ENCODE measurements at regions of chr22 and their contacts with region 1.

Region 1: DNA sequence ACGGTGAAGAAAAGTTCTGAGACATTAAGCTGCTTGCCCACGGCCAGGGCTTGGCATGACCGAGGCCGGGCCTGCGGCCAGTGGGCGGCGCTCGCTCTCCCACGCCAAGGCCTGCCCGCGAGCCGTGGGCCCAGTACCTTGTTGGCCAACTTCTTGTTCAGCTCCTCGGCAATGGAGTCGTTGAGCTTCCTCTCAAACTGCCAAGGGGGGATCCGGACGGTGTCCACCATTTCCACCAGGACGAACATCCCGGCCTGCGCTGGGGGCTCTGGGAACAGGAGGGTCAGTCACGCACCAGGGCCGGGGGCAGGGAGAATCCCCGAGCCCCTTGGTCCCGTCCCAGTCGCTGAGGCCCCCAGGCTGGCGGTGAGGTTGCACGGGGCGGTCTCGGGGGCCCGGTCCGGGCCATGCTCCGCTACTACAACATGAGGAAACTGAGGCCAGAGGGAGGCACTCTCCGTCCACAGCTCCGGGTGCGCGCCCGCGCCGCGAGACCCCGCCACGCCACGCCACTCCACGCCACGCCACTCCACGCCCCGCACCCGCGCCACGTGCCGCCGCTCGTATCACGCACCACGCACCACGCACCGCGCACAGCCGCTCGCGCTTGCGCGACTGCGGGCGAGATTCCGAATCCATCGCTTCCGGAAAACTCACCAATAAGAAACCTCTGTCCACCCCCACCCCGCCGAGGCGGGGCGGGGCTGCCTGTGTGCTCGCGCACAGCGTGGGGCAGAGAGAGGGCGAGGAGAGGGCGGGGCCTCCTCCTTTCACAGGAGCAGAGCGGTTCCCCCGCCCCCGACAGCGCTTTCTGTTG is at the start of gene POLR3H:
- DNase-seq: peak; percentile 100
- ATAC-seq: peak; percentile 97 to 99
- H3K4me3 ChIP-seq: peak within 1 kb of the TSS; percentile 74
- H3K27ac ChIP-seq: peak within 1 kb of the TSS; percentile 88
- H3K4me1 ChIP-seq: peaks cover 33% of the 10 kb centered on the region
- H3K27me3 ChIP-seq: no peaks in the 10 kb centered on the region
- CTCF ChIP-seq: peak; percentile 66
- total RNA-seq, gene POLR3H: 39.0 TPM

Region 2: DNA sequence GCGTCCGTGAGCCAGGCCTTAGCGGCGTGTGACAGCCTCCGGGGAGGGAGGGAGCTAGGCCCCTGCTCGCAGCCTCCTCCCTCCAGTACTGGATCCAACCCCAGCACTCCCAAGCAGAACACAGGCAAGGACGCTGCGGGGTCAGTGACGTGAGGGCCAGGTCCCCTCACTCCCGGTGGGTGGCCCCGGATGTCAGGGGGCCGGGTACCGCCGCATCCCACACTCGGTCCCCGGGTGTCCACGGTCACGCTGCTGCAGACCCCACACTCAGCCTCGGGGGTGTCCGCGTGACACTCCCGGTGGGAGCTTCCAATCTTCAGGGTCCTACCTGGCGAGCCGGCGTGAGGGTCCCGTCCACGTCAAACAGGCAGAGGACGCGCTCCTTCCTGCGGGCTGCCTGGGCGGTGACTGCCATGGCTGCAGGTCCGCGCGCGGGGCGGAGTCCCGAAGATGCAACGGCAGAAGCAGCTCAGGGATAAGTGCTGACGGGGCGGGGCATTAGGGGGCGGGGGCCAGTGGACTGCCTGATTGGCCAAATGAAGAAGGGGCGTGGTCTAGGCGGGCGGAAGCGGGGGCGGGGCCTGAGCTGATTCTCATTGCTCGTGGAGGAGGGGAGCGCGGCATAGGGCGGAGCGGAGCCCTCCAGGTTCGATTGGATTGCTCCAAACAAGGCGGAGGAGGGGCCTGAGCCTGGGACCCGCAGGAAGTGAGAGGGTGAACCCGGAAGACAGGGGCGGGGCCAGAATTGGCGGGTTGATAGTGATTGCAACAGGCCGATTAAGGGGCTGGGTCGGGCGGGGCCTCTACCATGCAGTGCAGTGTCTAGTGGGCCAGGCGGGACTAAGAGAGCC is 45.6 kb after region 1 on chr22 and contains the start of gene PMM1:
- intact Hi-C with region 1: loop called (anchors 10 kb)
- DNase-seq: peak; percentile 100
- ATAC-seq: peak; percentile 96 to 99
- H3K4me3 ChIP-seq: peak within 1 kb of the TSS; percentile 95
- H3K27ac ChIP-seq: peak within 1 kb of the TSS; percentile 88
- H3K4me1 ChIP-seq: peaks cover 22% of the 10 kb centered on the region
- H3K27me3 ChIP-seq: no peaks in the 10 kb centered on the region
- CTCF ChIP-seq: no peak
- total RNA-seq, gene PMM1: 47.3 TPM